ENCODE measurements at regions of chr1 and their contacts with region 1.

Region 1: GRCh38 chr1:151934048-151934493 is 24.8 kb upstream of the THEM4 start:
- DNase-seq: peak; percentile 54 to 76
- ATAC-seq: peak; percentile 94 to 97
- H3K4me3 ChIP-seq: no peak overlapping the region
- H3K27ac ChIP-seq: peak overlapping the region in 1 of 2 experiments; percentile 43; a peak in 1 of 6 replicates
- H3K4me1 ChIP-seq: peaks cover 33% of the 10 kb centered on the region
- CTCF ChIP-seq: peak; percentile 98
- EP300 ChIP-seq: no peak
- POLR2A ChIP-seq: no peak
- RAD21 ChIP-seq: peak; percentile 98 to 99

Region 2: DNA sequence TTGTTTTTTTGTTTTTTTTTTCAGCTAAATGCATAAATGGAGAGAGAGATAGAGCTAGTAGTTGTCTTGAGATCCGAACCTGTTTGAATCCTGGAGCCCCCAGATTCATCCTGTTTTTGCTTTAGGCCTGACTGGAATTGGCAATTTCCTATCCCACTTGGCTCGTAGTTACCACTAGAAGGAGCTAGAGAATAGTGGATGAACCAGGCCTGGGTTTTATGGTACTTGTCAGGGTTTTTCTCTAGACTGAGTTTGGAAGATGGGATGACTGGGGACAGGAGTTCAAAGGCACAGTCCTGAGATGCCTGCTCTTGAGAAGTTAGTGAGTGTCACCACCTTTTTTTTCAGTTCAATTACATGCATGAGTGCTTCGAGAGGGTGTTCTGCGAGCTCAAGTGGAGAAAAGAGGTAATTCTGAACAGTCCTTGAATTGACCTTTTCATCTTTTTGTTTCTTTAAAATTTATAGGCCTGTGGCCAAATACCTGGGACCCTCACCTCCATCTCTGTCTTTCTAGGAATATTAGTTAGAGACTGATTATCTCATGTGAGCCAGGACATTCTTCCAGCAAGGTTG is 240.9 kb before region 1 on chr1:
- CTCF ChIA-PET with region 1: no interaction called
- POLR2A ChIA-PET with region 1: no interaction called
- DNase-seq: peak; percentile 38 to 54
- ATAC-seq: peak; percentile 83 to 90
- H3K4me3 ChIP-seq: no peak overlapping the region
- H3K27ac ChIP-seq: no peak overlapping the region
- H3K4me1 ChIP-seq: no peaks in the 10 kb centered on the region
- CTCF ChIP-seq: peak; percentile 75
- EP300 ChIP-seq: no peak
- POLR2A ChIP-seq: no peak
- RAD21 ChIP-seq: peak; percentile 73 to 86

Region 3: DNA sequence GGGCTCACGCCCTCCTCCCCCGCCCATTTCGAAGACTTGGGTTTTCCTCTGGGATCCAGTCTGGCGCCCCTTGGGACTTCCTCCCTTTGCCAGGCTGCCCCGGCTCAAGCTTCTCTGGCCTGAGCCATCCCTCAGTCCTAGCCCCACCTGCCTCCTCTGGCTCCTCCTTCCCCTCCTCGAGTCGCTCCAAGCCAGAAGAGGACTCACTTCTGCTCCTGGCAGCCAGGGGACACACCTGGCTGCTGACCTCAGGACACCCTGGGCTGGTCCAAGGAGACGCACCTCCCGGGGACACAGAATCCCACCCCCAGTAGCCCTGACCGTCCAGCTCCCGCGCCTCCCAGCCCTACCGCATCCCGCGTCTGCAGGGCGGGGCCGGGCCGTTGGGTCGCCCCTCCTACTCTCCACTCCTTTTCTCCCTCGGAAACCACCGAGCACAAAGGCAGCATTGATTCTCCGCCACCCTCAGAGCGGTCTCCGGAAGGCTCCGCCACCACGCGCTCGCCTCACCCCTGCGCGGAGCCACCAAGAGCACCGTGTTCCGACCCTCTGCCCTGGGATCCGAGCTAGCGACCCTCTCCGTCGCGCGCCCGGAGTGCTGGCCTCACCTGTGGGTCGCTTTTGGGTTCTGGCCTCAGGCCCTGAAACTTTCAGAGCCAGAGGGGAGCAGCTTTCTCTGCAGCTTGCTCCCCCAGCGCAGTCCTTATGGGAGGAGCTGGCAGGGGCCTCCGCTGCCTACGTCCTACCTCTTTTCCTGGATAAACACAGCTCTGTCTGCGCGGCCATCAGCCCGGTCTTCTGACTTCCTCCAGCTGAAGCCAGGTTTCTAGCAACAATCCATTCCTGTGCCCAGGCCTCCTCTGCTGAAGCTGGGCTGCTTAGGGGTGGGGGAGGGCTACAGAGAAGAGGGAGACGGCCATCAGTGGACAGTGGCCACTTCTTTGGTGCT is 94.3 kb before region 1 on chr1 and contains the start of gene C2CD4D:
- CTCF ChIA-PET with region 1: no interaction called
- POLR2A ChIA-PET with region 1: no interaction called
- DNase-seq: no peak
- ATAC-seq: no peak
- H3K4me3 ChIP-seq: no peak within 1 kb of the TSS
- H3K27ac ChIP-seq: no peak within 1 kb of the TSS
- H3K4me1 ChIP-seq: 0 out of 3 replicates have a peak, but pooled peaks cover 3% of the 10 kb centered on the region
- CTCF ChIP-seq: no peak
- EP300 ChIP-seq: no peak
- POLR2A ChIP-seq: no peak
- RAD21 ChIP-seq: no peak
- polyA plus RNA-seq, gene C2CD4D: not detected in 2 replicates

Region 4: GRCh38 chr1:151945725-151946364 is 11.8 kb after region 1 on chr1:
- CTCF ChIA-PET with region 1: interaction called, 12 read pairs
- POLR2A ChIA-PET with region 1: interaction called, 4 read pairs
- DNase-seq: peak; percentile 90 to 97
- ATAC-seq: peak; percentile 73 to 83
- H3K4me3 ChIP-seq: 0 out of 3 replicates have a peak overlapping the region, but pooled peaks have one; percentile 3
- H3K27ac ChIP-seq: peak overlapping the region; percentile 63 to 79
- H3K4me1 ChIP-seq: peaks cover 62% of the 10 kb centered on the region
- CTCF ChIP-seq: no peak
- EP300 ChIP-seq: no peak
- POLR2A ChIP-seq: no peak
- RAD21 ChIP-seq: 0 out of 5 replicates have a peak, but pooled peaks of 1 of the 2 experiments have one; percentile 6

Region 5: DNA sequence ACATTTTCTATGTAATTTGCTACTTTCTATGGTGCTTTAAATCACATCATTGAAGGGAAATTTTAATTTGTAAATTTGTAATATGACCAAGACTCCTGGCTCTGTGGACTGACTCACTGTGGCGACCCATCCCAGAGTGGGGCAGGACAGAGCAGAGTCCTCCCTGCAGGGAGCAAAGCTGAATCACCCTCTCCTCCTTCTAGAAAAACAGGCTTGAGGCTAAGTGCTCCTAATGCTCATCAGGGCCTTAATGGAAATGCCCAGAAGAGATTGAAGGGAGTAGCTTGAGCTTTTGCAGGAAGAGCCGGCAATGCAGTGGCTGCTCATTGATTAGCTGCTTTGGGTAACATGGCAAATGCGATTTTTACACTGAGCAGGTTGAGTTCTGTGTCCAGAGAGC is 42.8 kb after region 1 on chr1:
- CTCF ChIA-PET with region 1: interaction called, 16 read pairs
- POLR2A ChIA-PET with region 1: no interaction called
- DNase-seq: peak; percentile 53 to 62
- ATAC-seq: peak; percentile 54 to 56
- H3K4me3 ChIP-seq: no peak overlapping the region
- H3K27ac ChIP-seq: peak overlapping the region; percentile 89 to 94
- H3K4me1 ChIP-seq: peaks cover 95% of the 10 kb centered on the region
- CTCF ChIP-seq: no peak
- EP300 ChIP-seq: no peak
- POLR2A ChIP-seq: no peak
- RAD21 ChIP-seq: no peak; a peak in 1 of 5 replicates

Region 6: GRCh38 chr1:152029144-152029928 is 95.3 kb after region 1 on chr1:
- CTCF ChIA-PET with region 1: interaction called, 49 read pairs
- POLR2A ChIA-PET with region 1: no interaction called
- DNase-seq: no peak
- ATAC-seq: peak; percentile 46 to 54; a peak in 4 of 6 replicates
- H3K4me3 ChIP-seq: no peak overlapping the region
- H3K27ac ChIP-seq: peak overlapping the region; percentile 57 to 77
- H3K4me1 ChIP-seq: peaks cover 35% of the 10 kb centered on the region
- CTCF ChIP-seq: no peak
- EP300 ChIP-seq: no peak
- POLR2A ChIP-seq: no peak
- RAD21 ChIP-seq: no peak

Measured in A549 (cell line).